Common myeloid progenitor, CD34-positive (primary cell): ENCODE measurements at regions of chr6 and their contacts with region 1.

Region 1: DNA sequence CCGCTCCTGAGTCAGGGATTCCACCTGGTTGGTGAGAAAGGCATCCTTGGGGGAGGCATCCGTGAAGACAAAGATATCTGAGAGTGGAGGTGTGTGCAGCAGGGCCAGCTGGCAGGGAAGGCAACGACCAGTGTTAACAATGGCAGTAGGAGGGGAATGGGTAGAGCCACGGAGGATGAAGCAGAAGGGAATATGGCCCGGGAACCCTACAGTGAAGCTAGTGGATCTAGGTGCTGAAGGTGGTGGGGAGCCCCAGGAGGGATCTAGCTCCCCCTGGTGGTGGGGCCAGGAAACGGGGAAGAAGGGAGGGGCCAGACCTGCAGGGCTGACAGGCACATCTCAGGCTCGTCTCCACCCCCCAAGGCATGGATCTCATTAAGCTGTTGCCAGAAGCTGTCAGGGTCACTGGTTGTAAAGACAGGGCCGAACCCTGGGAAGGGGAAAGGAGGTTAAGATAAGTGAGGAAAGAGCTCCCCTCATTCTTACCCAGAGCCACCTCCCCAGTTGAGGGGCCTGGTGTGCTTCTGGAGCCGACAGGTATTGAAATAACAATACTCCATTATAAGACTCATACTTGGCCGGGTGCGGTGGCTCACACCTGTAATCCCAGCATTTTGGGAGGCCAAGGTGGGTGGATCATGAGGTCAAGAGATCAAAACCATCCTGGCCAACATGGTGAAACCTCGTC is 7.3 kb downstream of the VWA7 start:
- DNase-seq: peak; percentile 84 to 91 (median 86)
- H3K4me3 ChIP-seq: no peak overlapping the region
- H3K27ac ChIP-seq: no peak overlapping the region
- H3K4me1 ChIP-seq: peaks cover 2 to 22% (median 12%) of the 10 kb centered on the region in 4 experiments
- H3K27me3 ChIP-seq: no peaks in the 10 kb centered on the region

Region 2: GRCh38 chr6:31712296-31712695 is 57.5 kb before region 1 on chr6:
- CTCF ChIA-PET with region 1: interaction called, 32 read pairs
- POLR2A ChIA-PET with region 1: interaction called, 5 read pairs
- DNase-seq: peak; percentile 68 to 80 (median 80)
- H3K4me3 ChIP-seq: no peak overlapping the region
- H3K27ac ChIP-seq: no peak overlapping the region
- H3K4me1 ChIP-seq: peaks cover 5 to 52% (median 36%) of the 10 kb centered on the region in 4 experiments
- H3K27me3 ChIP-seq: no peaks in the 10 kb centered on the region

Region 3: DNA sequence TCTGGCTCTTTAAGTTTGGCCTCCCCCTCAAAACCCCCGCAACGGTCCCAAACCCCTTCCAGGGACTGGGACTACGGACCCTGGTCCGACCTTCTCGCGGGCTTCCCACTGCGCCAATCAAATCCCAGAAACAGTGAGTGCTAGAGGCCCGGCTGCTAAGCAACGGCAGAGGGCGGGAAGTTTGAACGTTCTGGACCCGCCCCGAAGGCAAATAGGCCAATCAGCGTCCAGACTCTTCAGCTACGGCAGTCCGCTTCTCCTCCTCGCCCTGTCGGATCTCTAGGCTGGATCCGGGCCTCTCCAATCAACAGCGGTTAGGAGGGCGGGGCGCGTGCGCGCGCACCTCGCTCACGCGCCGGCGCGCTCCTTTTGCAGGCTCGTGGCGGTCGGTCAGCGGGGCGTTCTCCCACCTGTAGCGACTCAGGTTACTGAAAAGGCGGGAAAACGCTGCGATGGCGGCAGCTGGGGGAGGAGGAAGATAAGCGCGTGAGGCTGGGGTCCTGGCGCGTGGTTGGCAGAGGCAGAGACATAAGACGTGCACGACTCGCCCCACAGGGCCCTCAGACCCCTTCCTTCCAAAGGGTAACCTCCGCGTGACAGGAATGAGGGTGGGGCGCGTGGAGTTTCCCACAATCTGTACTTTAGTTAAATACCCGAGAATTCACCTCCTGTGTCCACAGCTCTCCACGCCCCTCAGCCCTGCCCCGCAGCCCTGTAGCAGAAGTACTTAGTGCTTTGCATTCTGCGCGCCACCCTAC is 30.0 kb before region 1 on chr6 and contains the start of gene MSH5:
- CTCF ChIA-PET with region 1: interaction called, 268 read pairs
- POLR2A ChIA-PET with region 1: interaction called, 15 read pairs
- DNase-seq: peak; percentile 96 to 98 (median 97)
- H3K4me3 ChIP-seq: peak within 1 kb of the TSS; percentile 71 to 100 (median 75)
- H3K27ac ChIP-seq: peak within 1 kb of the TSS; percentile 99
- H3K4me1 ChIP-seq: peaks cover 15 to 56% (median 44%) of the 10 kb centered on the region in 4 experiments
- H3K27me3 ChIP-seq: no peaks in the 10 kb centered on the region

Region 4: DNA sequence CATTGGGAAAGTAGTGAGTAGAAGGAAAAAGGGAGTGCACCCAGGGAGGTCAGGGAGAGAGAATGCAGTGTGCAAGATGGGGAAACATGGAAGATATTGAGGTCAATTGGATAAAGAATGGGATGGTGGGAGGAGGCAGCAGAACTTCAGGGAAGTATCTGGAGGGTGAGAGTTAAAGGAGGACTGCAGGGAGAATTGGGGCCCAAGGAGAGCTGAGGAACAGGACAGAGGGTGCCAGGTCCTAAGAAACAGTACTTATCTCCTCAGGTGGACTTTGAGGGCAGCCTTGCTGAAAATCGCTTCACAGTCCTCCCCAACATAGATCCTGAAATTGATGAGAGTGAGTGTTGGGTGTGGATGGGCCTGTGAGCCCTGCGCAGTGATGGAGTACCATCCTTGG is 11.5 kb before region 1 on chr6:
- CTCF ChIA-PET with region 1: interaction called, 16 read pairs
- POLR2A ChIA-PET with region 1: no interaction called
- DNase-seq: no peak
- H3K4me3 ChIP-seq: no peak overlapping the region
- H3K27ac ChIP-seq: no peak overlapping the region
- H3K4me1 ChIP-seq: no peaks in the 10 kb centered on the region
- H3K27me3 ChIP-seq: no peaks in the 10 kb centered on the region

Region 5: GRCh38 chr6:31834434-31835198 is 64.8 kb after region 1 on chr6:
- CTCF ChIA-PET with region 1: interaction called, 13 read pairs
- POLR2A ChIA-PET with region 1: no interaction called
- DNase-seq: peak; percentile 80 to 86 (median 82)
- H3K4me3 ChIP-seq: peak overlapping the region; percentile 72 to 99 (median 92)
- H3K27ac ChIP-seq: peak overlapping the region; percentile 98 to 99
- H3K4me1 ChIP-seq: peaks cover 36 to 70% (median 61%) of the 10 kb centered on the region in 4 experiments
- H3K27me3 ChIP-seq: no peaks in the 10 kb centered on the region